Posterior cingulate gyrus (tissue), 11 donors: ENCODE measurements at regions of chr12 and their contacts with region 1.

Region 1: GRCh38 chr12:22624870-22625761 is at the start of gene ETNK1:
- DNase-seq: peak; percentile 94 to 100 (median 96)

Region 2: DNA sequence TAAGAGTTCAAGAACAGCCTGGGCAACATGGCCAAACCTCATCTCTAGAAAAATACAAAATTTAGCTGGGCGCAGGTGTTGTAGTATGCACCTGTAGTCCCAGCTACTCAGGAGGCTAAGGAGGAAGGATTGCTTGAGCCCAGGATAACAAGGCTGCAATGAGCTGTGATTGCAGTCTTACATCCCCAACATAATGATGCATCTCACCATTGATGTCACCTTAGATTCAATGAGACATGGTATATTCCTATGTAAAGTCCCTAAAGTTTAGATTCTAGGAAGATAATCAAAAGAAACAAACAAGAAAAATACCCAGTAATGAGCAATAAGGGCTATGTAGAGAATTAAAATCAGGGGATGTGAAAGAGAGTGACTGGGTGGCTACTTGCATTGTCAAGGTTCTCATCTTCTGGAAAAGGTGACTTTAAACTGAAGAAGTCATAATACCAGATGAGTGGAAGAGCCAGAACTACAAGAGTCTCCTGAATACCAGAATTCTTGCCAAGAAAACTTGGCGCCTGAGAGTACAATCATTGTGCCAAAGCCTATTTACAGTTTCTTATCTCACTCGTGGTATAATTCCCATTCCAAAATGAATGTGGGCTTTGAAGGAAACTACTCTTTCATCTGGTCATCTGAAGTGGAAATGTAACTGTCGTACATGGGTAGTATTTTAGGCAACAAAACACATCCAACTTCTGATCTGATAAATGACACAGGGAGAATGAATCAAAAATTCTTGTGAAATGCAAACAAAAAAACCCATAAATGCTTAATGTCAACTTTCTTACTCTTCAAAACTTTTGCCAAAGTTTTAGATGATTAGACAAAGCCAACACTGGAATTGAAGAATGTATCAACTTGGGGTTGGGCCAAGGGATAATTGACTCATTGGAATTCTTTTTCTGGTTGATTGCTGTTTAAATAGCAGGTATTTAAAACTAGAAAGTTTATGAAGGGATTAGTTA is 209.5 kb before region 1 on chr12:
- intact Hi-C with region 1: no loop called
- DNase-seq: no peak

Region 3: GRCh38 chr12:22459838-22460490 is 165.2 kb before region 1 on chr12:
- intact Hi-C with region 1: loop called (anchors 5 kb)
- DNase-seq: no peak

Region 4: GRCh38 chr12:22544038-22544979 is 80.8 kb before region 1 on chr12 and contains the start of gene C2CD5:
- intact Hi-C with region 1: loop called (anchors 1 kb)
- DNase-seq: peak; percentile 92 to 99 (median 94)

Region 5: GRCh38 chr12:22577667-22578066 is 47.4 kb before region 1 on chr12:
- intact Hi-C with region 1: no loop called
- DNase-seq: no peak

Region 6: GRCh38 chr12:22729957-22730443 is 104.9 kb after region 1 on chr12:
- intact Hi-C with region 1: no loop called
- DNase-seq: no peak